Activated CD8-positive, alpha-beta T cell treated with anti-CD3 and anti-CD28 coated beads, Interleukin-2, amount 10 ng/mL, durations not matched to agents 7 days and 5 days (primary cell): ENCODE measurements at regions of chr15 and their contacts with region 1.

Region 1: DNA sequence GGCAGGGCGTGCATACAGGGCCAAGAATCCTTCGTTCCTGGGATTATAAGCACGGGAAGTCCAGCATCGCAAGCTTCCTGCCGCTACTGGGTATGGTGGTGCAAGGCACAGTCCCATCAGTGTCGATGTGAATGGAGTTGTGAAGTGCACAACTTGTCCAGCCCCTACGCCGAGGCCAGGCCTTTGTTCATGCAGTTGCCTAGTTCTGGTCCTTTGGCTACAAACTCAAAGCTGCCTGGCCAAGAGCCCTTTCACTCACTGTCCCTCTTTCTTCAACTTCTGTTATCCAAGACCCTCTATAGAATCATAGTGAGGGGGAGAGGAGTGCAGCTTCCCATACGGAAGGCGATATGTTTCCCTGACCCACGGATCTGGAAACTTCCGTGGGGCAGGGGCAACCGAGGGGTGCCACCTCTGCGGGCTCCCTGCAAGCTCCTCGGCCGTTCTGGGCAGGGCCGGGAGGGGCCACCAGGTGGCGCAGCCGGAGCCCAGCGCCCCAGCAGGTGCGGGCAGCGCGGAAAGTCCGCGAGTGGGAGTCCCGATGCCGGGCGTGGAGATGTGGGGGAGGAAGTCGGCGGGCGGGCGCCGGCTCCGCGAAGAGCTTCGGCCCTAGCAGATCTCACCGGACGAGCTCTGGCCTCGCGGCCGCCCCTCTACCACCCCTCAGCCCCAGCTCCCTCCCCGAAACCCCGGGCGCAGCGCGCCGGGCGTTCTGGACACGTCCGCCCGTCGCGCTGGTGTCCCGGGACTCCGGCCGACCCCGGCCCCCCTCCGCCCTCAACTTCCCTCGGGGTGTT is 693 bp downstream of the RASGRP1 start:
- DNase-seq: peak; percentile 89
- ATAC-seq: peak; percentile 81
- H3K4me3 Mint-ChIP-seq: peak overlapping the region; percentile 94
- H3K27ac Mint-ChIP-seq: peak overlapping the region; percentile 93
- H3K4me1 Mint-ChIP-seq: peaks cover 58% of the 10 kb centered on the region
- H3K27me3 Mint-ChIP-seq: no peaks in the 10 kb centered on the region

Region 2: DNA sequence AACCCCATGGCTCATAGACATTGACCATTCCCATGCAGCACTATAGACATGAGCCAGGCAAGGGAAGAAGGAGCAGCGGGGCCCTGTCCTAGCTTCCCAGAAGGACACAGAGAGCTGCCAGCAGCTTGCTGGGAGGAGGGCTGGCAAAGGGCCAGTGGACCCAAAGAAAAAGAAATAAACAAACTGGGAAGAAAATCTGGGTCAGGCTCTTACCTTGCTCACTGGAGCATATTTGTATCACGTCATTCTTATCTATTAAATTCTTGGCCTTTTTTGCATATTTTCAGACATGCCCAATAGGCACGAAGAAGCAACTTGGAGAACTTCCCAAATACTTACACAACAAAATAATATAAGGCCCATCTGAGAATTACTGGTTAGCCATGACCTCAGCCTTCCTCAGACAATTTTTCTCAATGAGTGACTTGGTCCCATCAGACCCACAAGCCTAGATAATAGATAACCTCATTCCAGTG is 27.7 kb before region 1 on chr15:
- CTCF ChIA-PET with region 1: interaction called, 19 read pairs
- POLR2A ChIA-PET with region 1: interaction called, 9 read pairs
- DNase-seq: peak; percentile 2
- ATAC-seq: no peak
- H3K4me3 Mint-ChIP-seq: no peak overlapping the region
- H3K27ac Mint-ChIP-seq: peak overlapping the region; percentile 73
- H3K4me1 Mint-ChIP-seq: peaks cover 97% of the 10 kb centered on the region
- H3K27me3 Mint-ChIP-seq: no peaks in the 10 kb centered on the region

Region 3: DNA sequence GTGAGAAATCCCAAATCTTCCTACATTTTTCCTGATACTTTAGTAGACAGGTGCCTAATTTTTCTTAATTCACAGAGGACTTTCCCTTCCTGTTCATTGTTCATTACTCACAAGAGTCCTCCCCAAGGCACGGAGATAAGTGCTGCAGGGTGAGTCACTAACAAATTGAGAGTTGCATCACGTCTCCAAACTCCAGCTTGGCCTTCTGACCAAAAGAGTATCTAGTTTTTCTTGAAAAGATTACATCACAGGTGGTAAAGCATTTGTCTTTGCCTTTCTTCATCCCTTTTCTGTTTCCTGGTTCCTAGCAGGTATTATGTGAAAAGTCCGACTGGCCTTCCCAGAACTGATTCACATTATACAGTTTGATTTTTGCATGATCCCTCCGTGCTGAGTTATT is 25.6 kb after region 1 on chr15:
- CTCF ChIA-PET with region 1: interaction called, 19 read pairs
- POLR2A ChIA-PET with region 1: interaction called, 12 read pairs
- DNase-seq: no peak
- ATAC-seq: no peak
- H3K4me3 Mint-ChIP-seq: no peak overlapping the region
- H3K27ac Mint-ChIP-seq: no peak overlapping the region
- H3K4me1 Mint-ChIP-seq: peaks cover 34% of the 10 kb centered on the region
- H3K27me3 Mint-ChIP-seq: no peaks in the 10 kb centered on the region

Region 4: GRCh38 chr15:38624244-38625205 is 60.6 kb after region 1 on chr15:
- CTCF ChIA-PET with region 1: interaction called, 31 read pairs
- POLR2A ChIA-PET with region 1: interaction called, 10 read pairs
- DNase-seq: no peak
- ATAC-seq: no peak
- H3K4me3 Mint-ChIP-seq: no peak overlapping the region
- H3K27ac Mint-ChIP-seq: no peak overlapping the region
- H3K4me1 Mint-ChIP-seq: peaks cover 32% of the 10 kb centered on the region
- H3K27me3 Mint-ChIP-seq: no peaks in the 10 kb centered on the region

Region 5: GRCh38 chr15:38647683-38648082 is 83.8 kb after region 1 on chr15:
- CTCF ChIA-PET with region 1: interaction called, 218 read pairs
- POLR2A ChIA-PET with region 1: interaction called, 254 read pairs
- DNase-seq: no peak
- ATAC-seq: no peak
- H3K4me3 Mint-ChIP-seq: no peak overlapping the region
- H3K27ac Mint-ChIP-seq: no peak overlapping the region
- H3K4me1 Mint-ChIP-seq: peaks cover 78% of the 10 kb centered on the region
- H3K27me3 Mint-ChIP-seq: no peaks in the 10 kb centered on the region

Region 6: GRCh38 chr15:38671675-38672254 is 107.8 kb after region 1 on chr15:
- CTCF ChIA-PET with region 1: interaction called, 125 read pairs
- POLR2A ChIA-PET with region 1: interaction called, 153 read pairs
- DNase-seq: peak; percentile 44
- ATAC-seq: peak; percentile 34
- H3K4me3 Mint-ChIP-seq: peak overlapping the region; percentile 44
- H3K27ac Mint-ChIP-seq: peak overlapping the region; percentile 91
- H3K4me1 Mint-ChIP-seq: peaks cover 84% of the 10 kb centered on the region
- H3K27me3 Mint-ChIP-seq: no peaks in the 10 kb centered on the region